ENCODE measurements at regions of chr2 and their contacts with region 1.

Region 1: GRCh38 chr2:164430166-164430783 is 191.0 kb downstream of the GRB14 start:
- DNase-seq: no peak
- ATAC-seq: no peak
- H3K4me3 ChIP-seq: no peak overlapping the region
- H3K27ac ChIP-seq: no peak overlapping the region
- H3K4me1 ChIP-seq: no peaks in the 10 kb centered on the region
- H3K27me3 ChIP-seq: no peaks in the 10 kb centered on the region

Region 2: DNA sequence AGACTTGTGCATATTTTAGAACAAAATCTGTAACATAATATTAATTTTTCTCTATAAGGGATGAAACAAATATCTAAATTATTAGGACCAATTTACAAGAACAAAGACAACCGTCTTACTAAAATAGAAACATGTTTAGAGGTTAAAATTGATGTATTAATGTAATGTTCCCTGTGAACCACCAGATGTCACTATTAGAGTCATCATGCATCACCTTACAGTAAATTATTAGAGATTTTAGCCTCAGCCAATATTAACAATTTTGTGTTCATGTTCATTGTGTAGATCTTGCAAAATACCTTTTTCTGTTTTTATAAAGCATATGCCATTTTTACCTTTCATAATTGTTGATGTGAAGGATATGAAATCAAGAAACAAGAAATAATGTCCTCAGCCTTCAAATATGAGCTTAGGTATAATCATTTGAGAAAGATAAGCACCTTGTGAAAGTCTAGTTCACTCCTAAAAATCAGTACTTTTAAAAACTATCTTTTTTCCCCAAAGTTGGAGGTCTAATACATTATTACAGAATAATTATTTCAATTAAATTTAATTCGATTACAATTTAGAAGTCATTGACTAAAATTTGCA is 1247.4 kb before region 1 on chr2:
- intact Hi-C with region 1: loop called in 1 of 2 experiments (anchors 5 kb)
- DNase-seq: no peak
- ATAC-seq: no peak
- H3K4me3 ChIP-seq: no peak overlapping the region
- H3K27ac ChIP-seq: no peak overlapping the region
- H3K4me1 ChIP-seq: no peaks in the 10 kb centered on the region
- H3K27me3 ChIP-seq: no peaks in the 10 kb centered on the region

Region 3: DNA sequence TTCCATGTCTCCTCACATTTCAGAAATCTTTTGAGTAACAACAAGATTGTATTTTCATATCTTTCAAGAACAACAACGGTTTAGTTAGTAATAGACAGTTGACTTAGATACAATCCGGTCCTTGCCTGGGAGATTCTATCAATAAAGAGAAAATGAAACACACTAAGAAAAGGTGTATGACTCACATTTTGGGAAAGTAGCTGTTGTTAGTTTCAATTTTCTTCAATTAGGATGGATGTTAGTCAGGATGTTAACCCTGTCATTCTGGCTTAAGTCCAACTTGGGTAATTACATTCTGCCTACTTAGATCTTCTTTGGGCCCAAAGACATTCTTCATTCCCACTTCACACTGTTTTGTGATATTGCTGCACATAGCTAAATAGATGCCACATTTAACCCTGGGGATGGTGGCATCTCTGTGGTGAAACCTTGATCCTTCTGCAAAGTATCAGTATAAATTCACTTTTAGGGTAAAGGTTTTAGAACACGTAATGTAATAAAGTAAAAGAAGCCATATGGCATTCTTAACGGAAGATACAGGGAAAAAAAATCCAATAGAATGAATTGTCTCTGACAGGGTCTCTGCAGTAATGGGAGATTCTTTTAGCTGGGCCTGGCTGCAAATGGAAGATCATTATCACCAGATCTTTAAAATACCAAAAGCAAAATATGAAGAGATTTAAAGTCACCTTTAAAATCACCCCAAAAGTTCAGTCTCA is 1059.9 kb before region 1 on chr2:
- intact Hi-C with region 1: no loop called
- DNase-seq: no peak
- ATAC-seq: no peak
- H3K4me3 ChIP-seq: no peak overlapping the region
- H3K27ac ChIP-seq: no peak overlapping the region
- H3K4me1 ChIP-seq: no peaks in the 10 kb centered on the region
- H3K27me3 ChIP-seq: no peaks in the 10 kb centered on the region

Region 4: GRCh38 chr2:163970058-163970813 is 460.0 kb before region 1 on chr2:
- intact Hi-C with region 1: no loop called
- DNase-seq: no peak
- ATAC-seq: peak; percentile 58
- H3K4me3 ChIP-seq: no peak overlapping the region
- H3K27ac ChIP-seq: peak overlapping the region in 1 of 2 donors; percentile 64
- H3K4me1 ChIP-seq: peaks cover 2 to 4% of the 10 kb centered on the region in 2 donors
- H3K27me3 ChIP-seq: no peaks in the 10 kb centered on the region

Region 5: DNA sequence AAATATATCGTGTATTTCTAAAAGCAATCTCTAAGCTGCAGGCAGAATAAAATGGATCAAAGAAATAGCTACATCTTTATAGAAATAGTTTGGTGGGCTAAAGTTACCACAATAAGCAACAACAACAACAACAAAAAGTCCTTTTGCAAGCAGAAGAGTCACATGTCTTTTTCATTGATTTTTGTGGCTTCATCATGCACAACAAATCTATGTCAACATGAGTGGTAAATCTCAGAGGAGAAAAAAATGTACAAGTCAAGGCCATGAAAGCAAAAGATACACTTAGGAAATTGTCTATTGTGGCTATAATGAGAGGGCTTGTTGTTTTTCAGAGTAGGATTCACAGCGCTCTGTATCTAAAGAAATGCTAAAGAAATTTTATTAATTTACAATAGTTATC is 78.7 kb before region 1 on chr2:
- intact Hi-C with region 1: no loop called
- DNase-seq: no peak
- ATAC-seq: no peak
- H3K4me3 ChIP-seq: no peak overlapping the region
- H3K27ac ChIP-seq: no peak overlapping the region
- H3K4me1 ChIP-seq: no peaks in the 10 kb centered on the region
- H3K27me3 ChIP-seq: no peaks in the 10 kb centered on the region

Region 6: GRCh38 chr2:164504258-164504657 is 74.0 kb after region 1 on chr2:
- intact Hi-C with region 1: no loop called
- DNase-seq: no peak
- ATAC-seq: no peak
- H3K4me3 ChIP-seq: no peak overlapping the region
- H3K27ac ChIP-seq: no peak overlapping the region
- H3K4me1 ChIP-seq: no peaks in the 10 kb centered on the region
- H3K27me3 ChIP-seq: no peaks in the 10 kb centered on the region

Measured in aorta (tissue), 5 donors.